IMR-90 (cell line): ENCODE measurements at regions of chr2 and their contacts with region 1.

Region 1: GRCh38 chr2:31333527-31334183 is 80.9 kb downstream of the XDH start:
- DNase-seq: peak; percentile 84
- ATAC-seq: peak; percentile 74
- H3K4me3 ChIP-seq: no peak overlapping the region
- H3K27ac ChIP-seq: no peak overlapping the region
- H3K4me1 ChIP-seq: peaks cover 17% of the 10 kb centered on the region
- H3K27me3 ChIP-seq: 0 out of 2 replicates have a peak, but pooled peaks cover 2% of the 10 kb centered on the region
- CTCF ChIP-seq: peak; percentile 99
- POLR2A ChIP-seq: no peak
- RAD21 ChIP-seq: peak; percentile 99

Region 2: DNA sequence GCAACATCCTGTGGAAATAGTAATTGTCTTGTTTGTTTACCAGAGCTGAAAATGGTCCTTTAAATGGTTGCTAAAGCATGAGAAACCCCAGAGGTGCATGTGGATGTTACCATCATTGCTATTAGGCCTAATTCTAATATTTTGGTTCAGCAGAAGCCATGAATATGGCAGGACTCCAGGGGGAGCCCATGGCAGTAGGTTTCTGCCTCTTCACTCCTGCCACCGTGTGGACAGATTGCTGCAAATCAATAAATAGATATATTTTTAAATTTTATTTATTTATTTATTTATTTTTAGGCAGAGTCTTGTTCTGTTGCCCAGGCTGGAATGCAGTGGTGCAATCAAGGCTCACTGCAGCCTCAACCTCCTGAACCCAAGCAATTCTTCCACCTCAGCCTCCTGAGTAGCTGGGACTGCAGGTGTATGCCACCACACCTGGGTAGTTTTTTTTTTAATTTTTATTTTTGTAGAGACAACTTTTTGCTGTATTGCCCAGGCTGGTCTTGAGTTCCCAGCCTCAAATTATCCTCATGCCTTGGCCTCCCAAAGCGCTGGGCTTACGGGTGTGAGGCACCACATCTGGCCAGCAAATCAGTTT is 471.5 kb before region 1 on chr2:
- CTCF ChIA-PET with region 1: interaction called, 13 read pairs
- POLR2A ChIA-PET with region 1: interaction called, 3 read pairs
- dilution Hi-C with region 1: no loop called
- in situ Hi-C with region 1: loop called (anchors 10 kb)
- intact Hi-C with region 1: loop called (anchors 1 kb)
- DNase-seq: peak; percentile 73
- ATAC-seq: peak; percentile 53
- H3K4me3 ChIP-seq: no peak overlapping the region
- H3K27ac ChIP-seq: no peak overlapping the region
- H3K4me1 ChIP-seq: no peaks in the 10 kb centered on the region
- H3K27me3 ChIP-seq: no peaks in the 10 kb centered on the region
- CTCF ChIP-seq: peak; percentile 88
- POLR2A ChIP-seq: no peak
- RAD21 ChIP-seq: peak; percentile 49

Region 3: GRCh38 chr2:31138037-31138962 is 195.4 kb before region 1 on chr2 and contains the start of gene GALNT14:
- CTCF ChIA-PET with region 1: no interaction called
- POLR2A ChIA-PET with region 1: no interaction called
- dilution Hi-C with region 1: no loop called
- in situ Hi-C with region 1: no loop called
- intact Hi-C with region 1: loop called (anchors 1 kb)
- DNase-seq: peak; percentile 7
- ATAC-seq: peak; percentile 82
- H3K4me3 ChIP-seq: peak within 1 kb of the TSS; percentile 32; the same call in 1 of the 2 replicates
- H3K27ac ChIP-seq: no peak within 1 kb of the TSS
- H3K4me1 ChIP-seq: no peaks in the 10 kb centered on the region
- H3K27me3 ChIP-seq: peaks cover 68% of the 10 kb centered on the region
- CTCF ChIP-seq: peak; percentile 31
- POLR2A ChIP-seq: no peak
- RAD21 ChIP-seq: peak; percentile 13; the same call in 1 of the 2 replicates
- total RNA-seq, gene GALNT14: 0.18 TPM in 1 of 2 replicates, not detected in the other

Region 4: GRCh38 chr2:31233741-31234682 is 99.6 kb before region 1 on chr2 and contains the start of gene EHD3:
- CTCF ChIA-PET with region 1: interaction called, 7 read pairs
- POLR2A ChIA-PET with region 1: no interaction called
- dilution Hi-C with region 1: no loop called
- in situ Hi-C with region 1: loop called (anchors 5 kb)
- intact Hi-C with region 1: loop called (anchors 1 kb)
- DNase-seq: peak; percentile 91
- ATAC-seq: peak; percentile 99
- H3K4me3 ChIP-seq: peak within 1 kb of the TSS; percentile 76
- H3K27ac ChIP-seq: peak within 1 kb of the TSS; percentile 56
- H3K4me1 ChIP-seq: peaks cover 8% of the 10 kb centered on the region; the same call in 1 of the 2 replicates
- H3K27me3 ChIP-seq: peaks cover 3% of the 10 kb centered on the region; the same call in 1 of the 2 replicates
- CTCF ChIP-seq: peak; percentile 72
- POLR2A ChIP-seq: peak; percentile 72
- RAD21 ChIP-seq: peak; percentile 66
- total RNA-seq, gene EHD3: 34.4 and 39.8 TPM in 2 replicates

Region 5: GRCh38 chr2:31523871-31524492 is 190.3 kb after region 1 on chr2:
- CTCF ChIA-PET with region 1: no interaction called
- POLR2A ChIA-PET with region 1: no interaction called
- dilution Hi-C with region 1: no loop called
- in situ Hi-C with region 1: no loop called
- intact Hi-C with region 1: loop called (anchors 1 kb)
- DNase-seq: peak; percentile 52
- ATAC-seq: peak; percentile 78
- H3K4me3 ChIP-seq: no peak overlapping the region
- H3K27ac ChIP-seq: no peak overlapping the region
- H3K4me1 ChIP-seq: no peaks in the 10 kb centered on the region
- H3K27me3 ChIP-seq: peaks cover 10% of the 10 kb centered on the region
- CTCF ChIP-seq: peak; percentile 71
- POLR2A ChIP-seq: no peak
- RAD21 ChIP-seq: peak; percentile 57